Activated naive CD4-positive, alpha-beta T cell treated with anti-CD3 and anti-CD28 coated beads for 36 hours (primary cell): ENCODE measurements at regions of chr5 and their contacts with region 1.

Region 1: GRCh38 chr5:173887610-173888472 is at the start of gene CPEB4:
- DNase-seq: peak; percentile 98
- H3K4me3 Mint-ChIP-seq: peak within 1 kb of the TSS; percentile 98
- H3K27ac Mint-ChIP-seq: peak within 1 kb of the TSS; percentile 96
- H3K4me1 Mint-ChIP-seq: peaks cover 66% of the 10 kb centered on the region
- H3K27me3 Mint-ChIP-seq: no peaks in the 10 kb centered on the region
- total RNA-seq, gene CPEB4: 7.6 to 7.8 TPM

Region 2: DNA sequence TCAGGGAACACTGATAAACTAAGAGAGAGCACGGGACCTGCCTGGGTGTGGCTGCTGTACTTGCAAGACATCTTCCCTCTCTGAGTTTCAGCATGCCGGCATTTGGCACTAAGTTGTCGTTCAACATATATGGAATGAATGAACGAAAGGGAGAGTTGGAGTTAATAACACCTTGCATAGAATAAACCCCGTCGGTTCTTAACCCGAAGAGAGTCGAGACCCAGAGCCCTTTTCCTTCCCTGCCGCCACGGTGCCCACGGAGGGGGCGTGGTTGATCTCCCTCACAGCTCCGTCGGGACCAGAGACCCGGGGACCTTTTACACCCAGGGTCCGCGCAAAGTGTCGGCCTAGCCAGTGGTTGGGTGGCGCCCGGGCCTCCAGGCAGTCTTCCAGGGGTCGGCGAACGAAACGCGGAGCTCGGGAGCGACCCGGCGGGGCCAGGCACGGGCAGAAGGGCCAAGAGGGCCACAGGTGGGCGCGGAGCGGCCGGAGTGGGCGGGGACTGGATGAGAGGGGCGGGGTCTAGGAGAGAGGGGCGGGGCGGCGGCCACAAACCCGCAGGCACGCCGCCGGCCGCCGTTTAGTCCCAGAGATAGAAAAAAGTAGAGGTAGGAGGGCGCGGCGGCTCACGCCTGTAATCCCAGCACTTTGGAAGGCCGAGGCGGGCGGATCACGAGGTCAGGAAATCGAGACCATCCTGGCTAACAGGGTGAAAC is 929.4 kb before region 1 on chr5:
- CTCF ChIA-PET with region 1: no interaction called
- intact Hi-C with region 1: loop called (anchors 1 kb)
- DNase-seq: peak; percentile 60
- H3K4me3 Mint-ChIP-seq: peak overlapping the region; percentile 93
- H3K27ac Mint-ChIP-seq: peak overlapping the region; percentile 86
- H3K4me1 Mint-ChIP-seq: peaks cover 16% of the 10 kb centered on the region
- H3K27me3 Mint-ChIP-seq: no peaks in the 10 kb centered on the region

Region 3: GRCh38 chr5:173573126-173573960 is 314.5 kb before region 1 on chr5:
- CTCF ChIA-PET with region 1: no interaction called
- intact Hi-C with region 1: no loop called
- DNase-seq: peak; percentile 70
- H3K4me3 Mint-ChIP-seq: no peak overlapping the region
- H3K27ac Mint-ChIP-seq: no peak overlapping the region
- H3K4me1 Mint-ChIP-seq: peaks cover 6% of the 10 kb centered on the region
- H3K27me3 Mint-ChIP-seq: peaks cover 13% of the 10 kb centered on the region

Region 4: GRCh38 chr5:173781814-173782670 is 105.8 kb before region 1 on chr5:
- CTCF ChIA-PET with region 1: no interaction called
- intact Hi-C with region 1: loop called (anchors 2 kb)
- DNase-seq: peak; percentile 84
- H3K4me3 Mint-ChIP-seq: no peak overlapping the region
- H3K27ac Mint-ChIP-seq: peak overlapping the region; percentile 86
- H3K4me1 Mint-ChIP-seq: peaks cover 31% of the 10 kb centered on the region
- H3K27me3 Mint-ChIP-seq: no peaks in the 10 kb centered on the region

Region 5: DNA sequence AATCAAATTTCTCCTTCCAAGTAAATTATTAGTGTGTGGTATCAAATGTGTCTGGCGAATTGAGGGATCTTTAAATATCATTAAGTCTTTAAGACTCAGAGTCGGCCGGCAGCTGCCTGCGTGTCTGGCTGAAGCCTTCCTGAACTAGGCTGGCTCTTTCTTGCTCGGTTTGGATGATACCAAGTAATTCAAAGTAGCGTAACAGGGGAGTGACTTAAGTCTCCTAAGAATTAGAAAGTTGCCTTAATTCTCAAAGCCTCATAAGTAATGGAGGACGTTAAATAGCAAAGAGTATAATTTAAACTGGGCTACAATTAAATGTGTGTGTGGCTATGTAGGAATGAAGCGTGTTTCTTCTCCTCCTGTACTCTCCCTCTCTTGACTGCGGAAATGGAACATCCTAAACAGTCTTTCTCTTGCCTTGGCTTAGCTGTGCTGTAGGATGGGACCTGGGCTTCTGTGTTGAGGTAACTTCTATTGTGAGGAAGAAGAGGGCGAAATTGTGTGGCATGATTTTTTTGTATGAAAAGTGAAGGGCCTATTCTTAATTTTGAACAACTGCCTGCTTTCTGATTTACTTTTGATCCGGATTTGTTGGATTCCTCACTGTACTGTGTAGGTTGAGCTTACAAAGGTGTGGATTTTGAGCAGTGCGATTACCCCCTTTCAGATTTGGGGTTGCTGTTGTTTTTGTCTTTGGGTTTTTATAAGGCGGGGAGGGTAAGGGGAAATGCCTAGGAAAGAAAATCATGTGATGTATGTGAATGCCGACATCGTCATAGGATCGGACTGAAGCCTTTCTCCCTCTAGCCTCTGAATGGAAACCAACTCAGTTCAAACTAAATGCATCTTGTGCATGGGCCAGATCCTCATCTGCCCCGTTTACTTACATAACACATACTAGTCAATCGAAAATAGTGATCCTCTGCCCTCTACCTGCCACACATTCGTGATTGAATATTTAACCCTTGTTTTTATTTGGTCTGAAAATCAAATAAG is 30.2 kb after region 1 on chr5:
- CTCF ChIA-PET with region 1: interaction called, 4 read pairs
- intact Hi-C with region 1: loop called (anchors 1 kb)
- DNase-seq: peak; percentile 72
- H3K4me3 Mint-ChIP-seq: no peak overlapping the region
- H3K27ac Mint-ChIP-seq: no peak overlapping the region
- H3K4me1 Mint-ChIP-seq: peaks cover 18% of the 10 kb centered on the region
- H3K27me3 Mint-ChIP-seq: no peaks in the 10 kb centered on the region

Region 6: DNA sequence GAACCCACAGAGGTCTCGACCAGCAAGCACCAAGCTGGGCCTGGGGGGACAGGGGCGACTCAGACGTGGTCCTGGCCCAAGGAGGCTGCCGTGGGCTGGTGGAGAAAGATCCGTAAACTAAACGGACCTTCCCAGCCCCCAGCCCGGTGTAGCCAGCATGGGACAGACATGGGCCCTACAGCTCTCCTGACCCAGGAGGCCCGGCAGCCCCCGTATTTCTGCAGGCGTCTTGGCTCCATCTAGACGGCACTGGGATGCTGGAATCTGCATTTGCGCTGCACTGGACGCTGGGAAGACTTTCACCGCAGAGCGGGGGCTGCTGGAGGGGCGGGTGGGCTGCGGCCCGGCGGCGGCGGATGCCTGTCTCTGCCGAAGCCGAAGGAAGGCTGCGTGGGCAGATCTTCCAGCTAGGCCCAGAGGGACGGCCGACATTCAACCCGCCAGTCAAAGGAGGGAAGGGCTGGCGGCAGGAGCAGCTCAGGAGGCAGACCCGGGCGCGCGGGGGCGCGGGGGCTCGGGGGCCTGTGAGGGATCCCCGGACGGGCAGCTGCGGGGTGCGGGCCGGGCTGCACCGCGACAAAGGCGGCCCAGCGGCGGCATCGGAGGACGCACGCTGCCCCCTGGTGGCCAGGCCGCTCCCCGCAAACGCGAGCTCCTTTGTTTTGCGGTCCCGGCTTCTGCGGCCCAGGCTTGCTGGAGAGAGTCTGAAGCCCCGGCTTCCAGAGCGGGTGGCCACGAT is 423.9 kb after region 1 on chr5:
- CTCF ChIA-PET with region 1: no interaction called
- intact Hi-C with region 1: no loop called
- DNase-seq: peak; percentile 71
- H3K4me3 Mint-ChIP-seq: no peak overlapping the region
- H3K27ac Mint-ChIP-seq: no peak overlapping the region
- H3K4me1 Mint-ChIP-seq: peaks cover 6% of the 10 kb centered on the region
- H3K27me3 Mint-ChIP-seq: peaks cover 39% of the 10 kb centered on the region

Region 7: DNA sequence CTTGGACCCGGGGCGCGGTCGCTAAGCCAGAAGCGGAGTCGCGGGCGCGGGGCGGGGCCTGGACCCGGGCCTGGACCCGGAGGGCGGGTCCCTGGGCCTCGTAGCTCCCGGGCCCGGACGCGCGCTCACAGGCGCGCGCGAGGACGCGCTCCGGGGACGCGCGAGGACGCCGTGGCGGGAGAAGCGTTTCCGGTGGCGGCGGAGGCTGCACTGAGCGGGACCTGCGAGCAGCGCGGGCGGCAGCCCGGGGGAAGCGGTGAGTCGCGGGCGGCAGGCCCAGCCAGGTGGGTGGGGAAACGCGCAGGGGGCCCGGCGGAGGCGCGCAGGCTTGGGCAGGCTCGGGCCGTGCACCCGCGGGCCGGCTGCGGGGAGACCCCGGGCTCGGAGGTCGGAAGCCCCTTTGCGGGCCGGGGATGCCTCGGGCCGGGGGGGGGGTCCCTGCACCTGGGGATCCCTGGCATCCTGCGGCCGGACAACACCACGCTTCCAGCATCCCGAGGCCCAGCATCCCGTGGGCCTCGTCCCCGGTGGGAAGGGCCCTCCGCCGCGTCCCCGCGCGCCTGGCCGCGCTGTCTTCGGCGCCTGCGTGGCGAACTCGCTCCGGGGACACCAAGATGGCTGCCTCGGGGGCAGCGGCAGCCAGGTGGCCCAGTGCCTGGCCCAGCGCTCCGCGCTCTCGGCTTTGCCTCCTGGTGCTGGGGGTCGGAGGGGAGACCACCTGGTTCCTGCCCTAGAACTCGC is 1590.7 kb after region 1 on chr5 and contains the start of gene SFXN1:
- CTCF ChIA-PET with region 1: no interaction called
- intact Hi-C with region 1: loop called (anchors 10 kb)
- DNase-seq: peak; percentile 86
- H3K4me3 Mint-ChIP-seq: peak within 1 kb of the TSS; percentile 94
- H3K27ac Mint-ChIP-seq: peak within 1 kb of the TSS; percentile 97
- H3K4me1 Mint-ChIP-seq: peaks cover 56% of the 10 kb centered on the region
- H3K27me3 Mint-ChIP-seq: no peaks in the 10 kb centered on the region
- total RNA-seq, gene SFXN1: 350 to 358 TPM